ENCODE measurements at regions of chr3 and their contacts with region 1.

Region 1: GRCh38 chr3:42547401-42547945 is 34.3 kb downstream of the SEC22C start:
- DNase-seq: peak; percentile 65
- H3K4me3 Mint-ChIP-seq: no peak overlapping the region
- H3K27ac Mint-ChIP-seq: peak overlapping the region; percentile 10
- H3K4me1 Mint-ChIP-seq: peaks cover 2% of the 10 kb centered on the region
- H3K27me3 Mint-ChIP-seq: no peaks in the 10 kb centered on the region

Region 2: DNA sequence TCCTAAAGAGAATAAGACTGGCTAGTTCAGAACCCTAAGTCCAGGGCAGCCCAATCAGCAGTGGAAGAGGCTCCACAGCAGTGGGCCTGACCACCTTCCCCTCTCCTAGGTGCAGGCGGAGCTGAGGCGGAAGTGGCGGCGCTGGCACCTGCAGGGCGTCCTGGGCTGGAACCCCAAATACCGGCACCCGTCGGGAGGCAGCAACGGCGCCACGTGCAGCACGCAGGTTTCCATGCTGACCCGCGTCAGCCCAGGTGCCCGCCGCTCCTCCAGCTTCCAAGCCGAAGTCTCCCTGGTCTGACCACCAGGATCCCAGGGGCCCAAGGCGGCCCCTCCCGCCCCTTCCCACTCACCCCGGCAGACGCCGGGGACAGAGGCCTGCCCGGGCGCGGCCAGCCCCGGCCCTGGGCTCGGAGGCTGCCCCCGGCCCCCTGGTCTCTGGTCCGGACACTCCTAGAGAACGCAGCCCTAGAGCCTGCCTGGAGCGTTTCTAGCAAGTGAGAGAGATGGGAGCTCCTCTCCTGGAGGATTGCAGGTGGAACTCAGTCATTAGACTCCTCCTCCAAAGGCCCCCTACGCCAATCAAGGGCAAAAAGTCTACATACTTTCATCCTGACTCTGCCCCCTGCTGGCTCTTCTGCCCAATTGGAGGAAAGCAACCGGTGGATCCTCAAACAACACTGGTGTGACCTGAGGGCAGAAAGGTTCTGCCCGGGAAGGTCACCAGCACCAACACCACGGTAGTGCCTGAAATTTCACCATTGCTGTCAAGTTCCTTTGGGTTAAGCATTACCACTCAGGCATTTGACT is 11.3 kb before region 1 on chr3:
- CTCF ChIA-PET with region 1: interaction called, 13 read pairs
- POLR2A ChIA-PET with region 1: no interaction called
- DNase-seq: peak; percentile 68
- H3K4me3 Mint-ChIP-seq: no peak overlapping the region
- H3K27ac Mint-ChIP-seq: no peak overlapping the region
- H3K4me1 Mint-ChIP-seq: peaks cover 44% of the 10 kb centered on the region
- H3K27me3 Mint-ChIP-seq: no peaks in the 10 kb centered on the region

Region 3: DNA sequence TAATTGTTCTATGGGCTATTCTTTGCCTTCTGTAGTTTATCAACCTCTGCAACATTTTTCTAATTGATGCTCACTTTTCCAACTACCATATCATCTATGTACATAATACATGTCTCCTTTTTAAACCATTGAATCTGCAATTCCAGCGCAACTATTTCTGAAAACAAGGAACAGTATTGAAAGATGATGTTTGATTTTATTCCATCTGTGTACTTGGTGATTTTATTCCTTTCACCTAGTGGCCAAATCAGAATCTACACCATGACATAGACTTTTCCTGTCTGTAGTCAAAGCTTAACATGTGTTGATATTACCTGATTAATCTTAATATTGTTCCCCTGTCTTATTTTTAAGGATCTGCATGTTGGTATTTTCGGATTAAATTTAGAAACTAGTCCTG is 66.0 kb after region 1 on chr3:
- CTCF ChIA-PET with region 1: no interaction called
- POLR2A ChIA-PET with region 1: no interaction called
- DNase-seq: no peak
- H3K4me3 Mint-ChIP-seq: no peak overlapping the region
- H3K27ac Mint-ChIP-seq: no peak overlapping the region
- H3K4me1 Mint-ChIP-seq: peaks cover 53% of the 10 kb centered on the region
- H3K27me3 Mint-ChIP-seq: no peaks in the 10 kb centered on the region

Region 4: DNA sequence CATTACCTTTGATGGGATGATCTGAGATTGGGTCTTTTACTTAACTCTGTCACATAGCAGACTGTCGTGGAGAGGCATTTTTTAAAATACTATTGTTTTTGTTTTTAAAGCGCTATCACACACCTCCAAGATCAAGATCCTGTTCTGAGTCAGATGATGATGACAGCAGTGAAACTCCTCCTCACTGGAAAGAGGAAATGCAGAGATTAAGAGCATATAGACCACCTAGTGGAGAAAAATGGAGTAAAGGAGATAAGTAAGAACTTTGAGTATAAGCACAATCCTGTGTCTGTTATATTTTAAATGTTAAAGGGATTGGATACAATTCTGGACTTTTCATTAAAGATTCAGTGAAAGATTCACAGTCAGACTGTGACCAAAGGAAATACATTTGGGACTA is 87.6 kb after region 1 on chr3:
- CTCF ChIA-PET with region 1: no interaction called
- POLR2A ChIA-PET with region 1: no interaction called
- DNase-seq: no peak
- H3K4me3 Mint-ChIP-seq: no peak overlapping the region
- H3K27ac Mint-ChIP-seq: no peak overlapping the region
- H3K4me1 Mint-ChIP-seq: peaks cover 5% of the 10 kb centered on the region
- H3K27me3 Mint-ChIP-seq: no peaks in the 10 kb centered on the region

Measured in activated CD4-positive, alpha-beta T cell treated with anti-CD3 and anti-CD28 coated beads, Interleukin-2, amount 10 ng/mL, durations not matched to agents 7 days and 5 days (primary cell).